ENCODE measurements at regions of chr19 and their contacts with region 1.

Region 1: GRCh38 chr19:47124937-47125668 is 5.5 kb upstream of the SAE1 start:
- DNase-seq: no peak
- H3K4me3 ChIP-seq: no peak overlapping the region
- H3K27ac ChIP-seq: no peak overlapping the region
- H3K4me1 ChIP-seq: no peaks in the 10 kb centered on the region
- H3K27me3 ChIP-seq: no peaks in the 10 kb centered on the region
- CTCF ChIP-seq: peak; percentile 60 to 88 (median 84)
- POLR2A ChIP-seq: no peak

Region 2: GRCh38 chr19:47035127-47036096 is 89.7 kb before region 1 on chr19:
- intact Hi-C with region 1: loop called (anchors 10 kb)
- DNase-seq: peak; percentile 85
- H3K4me3 ChIP-seq: peak overlapping the region; percentile 29 to 36
- H3K27ac ChIP-seq: peak overlapping the region; percentile 69 to 75
- H3K4me1 ChIP-seq: no peaks in the 10 kb centered on the region
- H3K27me3 ChIP-seq: no peaks in the 10 kb centered on the region
- CTCF ChIP-seq: peak; percentile 93 to 99 (median 96)
- POLR2A ChIP-seq: peak; percentile 41

Region 3: GRCh38 chr19:47075179-47075810 is 49.8 kb before region 1 on chr19:
- intact Hi-C with region 1: loop called (anchors 1 kb)
- DNase-seq: no peak
- H3K4me3 ChIP-seq: no peak overlapping the region
- H3K27ac ChIP-seq: no peak overlapping the region
- H3K4me1 ChIP-seq: no peaks in the 10 kb centered on the region
- H3K27me3 ChIP-seq: no peaks in the 10 kb centered on the region
- CTCF ChIP-seq: no peak
- POLR2A ChIP-seq: no peak

Measured in prostate gland (tissue), 2 donors.